ENCODE measurements at regions of chr4 and their contacts with region 1.

Region 1: DNA sequence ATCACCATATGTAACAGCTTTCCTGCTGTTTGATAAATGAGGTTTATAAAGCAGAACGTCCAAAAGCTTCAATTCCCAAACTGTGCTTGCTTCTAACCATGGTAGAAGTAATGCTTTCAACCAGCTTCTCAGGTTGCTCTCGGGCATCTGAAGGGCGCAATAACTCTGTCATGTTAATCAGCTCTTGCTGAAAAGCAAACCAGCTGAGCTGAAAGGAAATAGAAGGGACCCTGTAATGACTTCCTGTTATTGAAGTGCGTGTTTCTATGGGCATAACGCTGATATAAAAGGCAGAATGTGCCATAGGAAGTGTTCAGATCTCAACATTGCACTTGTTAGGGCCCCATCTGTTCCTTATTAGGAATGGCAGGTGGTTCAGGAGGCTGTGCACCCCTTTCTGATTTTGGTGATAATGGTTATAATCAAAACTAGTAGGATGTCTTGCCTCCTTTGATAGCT is 21.2 kb downstream of the HERC3 start:
- DNase-seq: peak; percentile 61
- H3K4me3 Mint-ChIP-seq: peak overlapping the region; percentile 62
- H3K27ac Mint-ChIP-seq: peak overlapping the region; percentile 92
- H3K4me1 Mint-ChIP-seq: peaks cover 57% of the 10 kb centered on the region
- H3K27me3 Mint-ChIP-seq: no peaks in the 10 kb centered on the region

Region 2: GRCh38 chr4:88591787-88592599 is 21.5 kb before region 1 on chr4 and contains the start of gene HERC3:
- CTCF ChIA-PET with region 1: interaction called, 26 read pairs
- POLR2A ChIA-PET with region 1: no interaction called
- DNase-seq: peak; percentile 87
- H3K4me3 Mint-ChIP-seq: peak within 1 kb of the TSS; percentile 92
- H3K27ac Mint-ChIP-seq: peak within 1 kb of the TSS; percentile 90
- H3K4me1 Mint-ChIP-seq: peaks cover 37% of the 10 kb centered on the region
- H3K27me3 Mint-ChIP-seq: peaks cover 5% of the 10 kb centered on the region
- total RNA-seq, gene HERC3: 28.1 to 33.3 TPM

Region 3: GRCh38 chr4:88600176-88600838 is 13.1 kb before region 1 on chr4:
- CTCF ChIA-PET with region 1: interaction called, 26 read pairs
- POLR2A ChIA-PET with region 1: no interaction called
- DNase-seq: no peak
- H3K4me3 Mint-ChIP-seq: no peak overlapping the region
- H3K27ac Mint-ChIP-seq: no peak overlapping the region
- H3K4me1 Mint-ChIP-seq: peaks cover 55% of the 10 kb centered on the region
- H3K27me3 Mint-ChIP-seq: no peaks in the 10 kb centered on the region

Region 4: GRCh38 chr4:88737307-88737941 is 124.0 kb after region 1 on chr4:
- CTCF ChIA-PET with region 1: no interaction called
- POLR2A ChIA-PET with region 1: no interaction called
- DNase-seq: peak; percentile 39
- H3K4me3 Mint-ChIP-seq: no peak overlapping the region
- H3K27ac Mint-ChIP-seq: peak overlapping the region; percentile 2
- H3K4me1 Mint-ChIP-seq: peaks cover 15% of the 10 kb centered on the region
- H3K27me3 Mint-ChIP-seq: no peaks in the 10 kb centered on the region